Left ventricle myocardium superior (tissue), 1 donor: ENCODE measurements at regions of chr6 and their contacts with region 1.

Region 1: DNA sequence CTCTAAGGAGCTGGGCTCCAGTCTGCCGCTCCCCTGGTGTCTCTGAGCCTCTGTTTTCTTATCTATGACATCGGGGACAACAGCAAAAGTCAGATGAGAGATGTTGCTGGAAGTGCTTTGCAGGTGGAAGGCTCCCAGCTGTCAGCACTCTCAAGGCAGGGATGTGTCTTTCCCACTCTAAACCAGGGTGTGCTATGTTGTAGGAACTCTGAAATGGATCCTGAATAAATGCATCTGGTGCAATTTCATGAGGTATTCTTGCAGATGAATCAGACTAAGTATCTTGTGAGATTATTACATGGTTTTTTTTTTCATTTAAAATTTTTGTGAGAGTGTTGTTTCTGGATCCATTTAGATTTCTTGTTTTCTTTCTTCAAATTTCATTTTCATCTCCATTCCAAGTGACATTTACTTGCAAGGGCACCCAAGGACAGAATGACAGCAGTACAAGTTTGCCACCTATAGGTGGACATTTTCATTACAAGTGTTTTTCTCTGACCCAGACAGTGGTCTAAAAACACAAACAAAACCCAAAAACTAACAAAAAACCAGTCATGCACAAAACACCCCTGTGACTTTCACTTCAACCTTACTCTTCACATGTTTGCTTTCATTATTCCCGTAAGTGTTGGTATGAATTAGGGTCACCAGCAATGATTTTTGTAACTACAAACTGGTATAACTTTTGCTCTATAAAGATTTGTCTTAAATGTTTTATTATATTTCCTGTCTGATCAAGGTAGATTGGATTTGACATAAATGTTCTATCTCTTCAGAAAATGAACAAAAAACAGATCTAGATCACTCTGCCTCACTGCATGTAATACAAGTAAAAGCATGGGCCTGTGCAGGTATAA is 14.7 kb upstream of the SIM1 start:
- DNase-seq: no peak
- ATAC-seq: peak; percentile 31

Region 2: GRCh38 chr6:100116411-100117194 is 362.8 kb before region 1 on chr6:
- intact Hi-C with region 1: loop called (anchors 10 kb)
- DNase-seq: no peak
- ATAC-seq: no peak

Region 3: DNA sequence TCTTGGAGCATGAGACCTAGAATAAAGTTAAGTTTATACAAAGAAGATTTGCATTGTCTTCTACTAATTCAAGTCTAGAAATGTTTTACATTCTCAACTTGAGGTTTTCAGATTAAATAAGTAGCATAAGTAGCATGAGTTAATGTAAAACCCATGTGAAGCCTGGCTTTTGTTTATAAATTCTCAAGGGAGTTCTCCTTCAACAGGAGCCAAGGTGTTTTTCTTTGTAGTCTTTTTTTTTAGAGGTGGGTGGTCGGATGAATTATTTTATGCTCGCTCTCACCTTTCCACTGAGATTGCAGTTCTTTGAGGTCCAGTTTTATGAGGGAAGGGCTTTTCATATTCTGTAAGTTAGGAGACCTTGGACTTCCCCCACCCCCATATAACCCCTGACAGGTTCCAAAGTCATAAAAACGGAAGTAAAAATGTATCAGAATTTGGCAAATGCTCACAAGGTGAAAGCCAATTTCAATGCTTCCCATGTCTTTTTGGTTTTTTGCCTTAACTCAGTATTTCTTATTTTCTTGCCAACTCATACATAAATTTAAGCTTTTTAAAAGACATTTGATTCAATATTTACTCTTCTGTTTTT is 646.1 kb after region 1 on chr6:
- intact Hi-C with region 1: no loop called
- DNase-seq: no peak
- ATAC-seq: no peak